Vagina (tissue), 2 donors: ENCODE measurements at regions of chr11 and their contacts with region 1.

Region 1: DNA sequence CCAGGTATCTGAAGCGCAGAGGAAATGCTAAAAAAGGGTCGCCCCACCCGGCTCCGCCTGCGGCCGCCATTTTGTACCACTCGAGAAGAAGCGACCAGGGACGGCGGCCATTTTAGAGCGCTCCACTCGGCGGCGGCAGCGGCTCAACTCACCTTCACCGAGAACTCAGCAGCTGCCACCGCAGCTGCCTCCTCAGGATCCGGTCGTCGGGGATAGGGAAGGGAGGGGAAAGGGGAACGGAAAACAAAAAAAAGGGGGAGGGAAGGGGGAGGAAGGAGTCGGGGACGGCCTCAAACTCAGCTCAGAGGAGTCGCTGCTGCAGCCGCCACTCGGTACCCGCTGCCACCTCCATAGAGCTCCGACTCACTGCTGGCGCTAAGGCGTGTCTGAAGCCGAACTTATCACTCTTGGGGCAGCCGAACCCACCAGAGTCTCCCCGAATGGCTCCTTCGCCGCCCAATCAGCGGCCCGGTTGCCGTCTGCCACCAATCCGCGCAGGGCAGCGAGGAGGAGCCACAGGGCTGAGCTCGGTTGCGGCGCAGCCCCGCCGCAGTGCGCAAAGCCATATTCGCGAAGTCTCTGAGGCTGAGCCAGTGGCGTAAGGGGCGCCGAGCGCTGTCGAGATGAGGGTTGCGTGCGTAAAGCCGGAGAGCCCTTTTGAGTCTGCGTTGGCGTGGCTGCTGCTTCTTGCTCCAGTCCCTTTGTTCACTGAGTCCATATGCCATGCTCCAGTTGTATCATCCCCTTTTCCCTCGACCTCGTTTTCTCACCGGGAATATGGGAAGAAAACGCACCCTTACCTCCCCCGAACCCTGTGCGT is at the start of gene EIF4G2:
- DNase-seq: peak; percentile 99
- H3K4me3 ChIP-seq: peak within 1 kb of the TSS; percentile 50 to 93
- H3K27ac ChIP-seq: peak within 1 kb of the TSS; percentile 99
- H3K4me1 ChIP-seq: peaks cover 39% of the 10 kb centered on the region
- H3K27me3 ChIP-seq: no peaks in the 10 kb centered on the region
- CTCF ChIP-seq: no peak
- POLR2A ChIP-seq: peak; percentile 79 to 98
- total RNA-seq, gene EIF4G2: 368 TPM

Region 2: GRCh38 chr11:8989453-8989852 is 1819.3 kb before region 1 on chr11:
- intact Hi-C with region 1: no loop called
- DNase-seq: no peak
- H3K4me3 ChIP-seq: no peak overlapping the region
- H3K27ac ChIP-seq: no peak overlapping the region
- H3K4me1 ChIP-seq: no peaks in the 10 kb centered on the region
- H3K27me3 ChIP-seq: no peaks in the 10 kb centered on the region
- CTCF ChIP-seq: no peak
- POLR2A ChIP-seq: no peak

Region 3: DNA sequence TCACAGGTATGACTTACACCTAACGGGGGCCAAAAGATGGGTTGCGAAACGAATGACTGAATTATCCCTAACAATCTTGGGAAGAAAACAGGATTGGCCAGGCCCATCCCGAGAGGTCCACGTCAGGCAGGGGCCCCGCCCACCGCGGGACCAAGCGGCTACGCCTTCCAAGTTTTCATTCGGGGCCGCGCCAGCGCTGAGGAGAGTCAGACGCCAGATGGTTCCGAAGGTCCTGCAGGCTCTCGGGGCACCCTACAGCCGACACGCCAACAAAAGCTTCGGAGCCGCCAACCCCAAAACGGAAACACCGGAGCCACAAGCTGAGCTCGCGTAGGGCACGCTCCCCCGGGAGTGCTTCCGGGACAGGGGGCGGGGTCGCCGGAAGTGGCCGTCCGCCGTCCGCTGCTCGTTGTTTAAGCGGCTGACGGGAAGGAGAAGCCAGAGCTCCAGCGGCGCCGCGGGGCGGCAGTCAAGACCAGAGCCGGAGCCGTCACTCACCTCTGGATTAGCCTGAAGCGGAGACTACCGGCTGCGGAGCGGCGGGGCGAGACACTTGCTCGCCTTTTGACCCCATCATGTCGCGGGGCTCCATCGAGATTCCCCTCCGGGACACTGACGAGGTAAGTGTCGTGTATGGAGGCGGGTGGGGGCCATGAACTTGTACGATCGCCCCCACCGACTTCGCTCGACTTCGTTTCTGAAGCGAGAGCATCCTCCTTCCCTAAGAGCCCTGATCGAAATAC is 57.8 kb before region 1 on chr11 and contains the start of gene CTR9:
- intact Hi-C with region 1: loop called (anchors 2 kb)
- DNase-seq: peak in 1 of 2 donors; percentile 96
- H3K4me3 ChIP-seq: peak within 1 kb of the TSS; percentile 84 to 92
- H3K27ac ChIP-seq: peak within 1 kb of the TSS; percentile 91
- H3K4me1 ChIP-seq: peaks cover 14% of the 10 kb centered on the region
- H3K27me3 ChIP-seq: no peaks in the 10 kb centered on the region
- CTCF ChIP-seq: no peak
- POLR2A ChIP-seq: peak in 1 of 2 donors; percentile 70
- total RNA-seq, gene CTR9: 20.6 TPM

Region 4: GRCh38 chr11:10857709-10858438 is 49.1 kb after region 1 on chr11 and contains the start of gene ZBED5:
- intact Hi-C with region 1: loop called (anchors 5 kb)
- DNase-seq: peak in 1 of 2 donors; percentile 98
- H3K4me3 ChIP-seq: peak within 1 kb of the TSS; percentile 63 to 91
- H3K27ac ChIP-seq: peak within 1 kb of the TSS; percentile 96
- H3K4me1 ChIP-seq: peaks cover 38% of the 10 kb centered on the region
- H3K27me3 ChIP-seq: no peaks in the 10 kb centered on the region
- CTCF ChIP-seq: peak in 1 of 3 experiments; percentile 13
- POLR2A ChIP-seq: peak; percentile 68 to 89
- total RNA-seq, gene ZBED5: 40.8 TPM